ENCODE measurements at regions of chr15 and their contacts with region 1.

Region 1: GRCh38 chr15:86121568-86122225 is 42.0 kb downstream of the AGBL1 start:
- DNase-seq: no peak
- ATAC-seq: no peak

Region 2: GRCh38 chr15:86073281-86073680 is 48.4 kb before region 1 on chr15:
- intact Hi-C with region 1: loop called (anchors 5 kb)
- DNase-seq: no peak
- ATAC-seq: no peak

Region 3: DNA sequence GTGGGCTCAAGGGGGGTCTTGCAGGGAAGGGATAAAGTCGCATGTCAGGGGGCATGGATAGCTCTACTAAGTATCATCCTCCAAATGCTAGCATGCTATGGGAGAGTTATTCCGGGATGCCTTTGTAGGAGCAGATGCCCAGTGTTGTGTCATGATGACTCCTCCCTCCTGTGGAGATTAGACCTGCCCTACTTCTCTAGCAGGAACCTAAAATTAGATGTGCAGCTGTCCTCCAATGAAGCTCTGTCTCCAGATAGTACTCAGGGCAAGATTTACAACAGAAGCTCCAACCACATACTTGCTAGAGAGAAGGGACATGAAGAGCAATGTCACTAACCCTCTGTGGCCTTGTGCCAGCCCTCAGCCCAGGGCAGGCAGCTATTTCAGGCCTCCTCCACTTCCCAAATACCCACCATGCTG is 40.5 kb after region 1 on chr15:
- intact Hi-C with region 1: no loop called
- DNase-seq: no peak
- ATAC-seq: peak; percentile 63

Region 4: GRCh38 chr15:86183596-86184491 is 62.1 kb after region 1 on chr15:
- intact Hi-C with region 1: no loop called
- DNase-seq: no peak
- ATAC-seq: no peak

Region 5: DNA sequence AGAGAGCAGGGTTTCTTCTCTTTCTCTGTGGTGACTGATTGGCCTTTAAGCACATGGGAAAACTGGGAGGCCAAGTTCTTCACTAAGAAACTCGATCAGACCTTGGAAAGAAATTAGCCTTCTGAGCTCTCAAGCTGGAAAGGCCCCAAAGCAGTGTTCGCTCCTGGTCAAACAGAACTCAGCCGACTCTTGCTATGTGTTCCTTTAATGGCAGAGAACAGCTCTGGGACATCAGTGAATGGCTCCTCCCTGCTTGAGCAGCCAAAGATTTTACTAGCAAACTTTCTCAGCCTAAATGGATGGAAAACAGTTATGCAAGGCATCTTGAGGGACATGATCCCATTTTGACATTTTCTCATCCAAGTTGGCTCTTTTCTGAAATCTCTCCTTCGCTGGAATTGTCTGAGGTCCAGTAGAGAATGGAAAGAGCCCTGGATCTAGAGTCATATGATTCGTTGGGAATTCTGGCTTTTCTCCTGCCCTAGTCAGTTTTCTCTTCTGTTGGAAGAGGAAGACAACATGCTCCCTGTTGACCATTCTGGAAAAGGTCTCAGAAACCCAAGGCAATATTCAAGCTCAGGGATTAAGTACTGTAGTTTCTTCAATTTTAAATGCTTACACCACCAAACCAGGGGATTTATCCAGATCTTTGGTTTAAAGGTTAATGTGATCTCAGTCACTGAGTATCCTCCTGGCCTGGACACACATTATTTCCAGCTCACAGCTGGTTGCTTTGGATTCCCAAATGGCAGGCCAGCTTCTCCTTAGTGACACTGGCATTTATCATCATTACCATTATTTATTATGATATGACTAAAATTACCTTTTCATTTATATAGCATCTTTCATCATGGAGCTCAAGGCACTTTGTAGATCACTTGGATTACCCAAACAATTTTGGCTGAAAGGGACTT is 277.6 kb after region 1 on chr15:
- intact Hi-C with region 1: no loop called
- DNase-seq: peak; percentile 33
- ATAC-seq: peak; percentile 98

Measured in left ventricle myocardium superior (tissue), 1 donor.